CD4-positive, alpha-beta T cell (primary cell): ENCODE measurements at regions of chr15 and their contacts with region 1.

Region 1: DNA sequence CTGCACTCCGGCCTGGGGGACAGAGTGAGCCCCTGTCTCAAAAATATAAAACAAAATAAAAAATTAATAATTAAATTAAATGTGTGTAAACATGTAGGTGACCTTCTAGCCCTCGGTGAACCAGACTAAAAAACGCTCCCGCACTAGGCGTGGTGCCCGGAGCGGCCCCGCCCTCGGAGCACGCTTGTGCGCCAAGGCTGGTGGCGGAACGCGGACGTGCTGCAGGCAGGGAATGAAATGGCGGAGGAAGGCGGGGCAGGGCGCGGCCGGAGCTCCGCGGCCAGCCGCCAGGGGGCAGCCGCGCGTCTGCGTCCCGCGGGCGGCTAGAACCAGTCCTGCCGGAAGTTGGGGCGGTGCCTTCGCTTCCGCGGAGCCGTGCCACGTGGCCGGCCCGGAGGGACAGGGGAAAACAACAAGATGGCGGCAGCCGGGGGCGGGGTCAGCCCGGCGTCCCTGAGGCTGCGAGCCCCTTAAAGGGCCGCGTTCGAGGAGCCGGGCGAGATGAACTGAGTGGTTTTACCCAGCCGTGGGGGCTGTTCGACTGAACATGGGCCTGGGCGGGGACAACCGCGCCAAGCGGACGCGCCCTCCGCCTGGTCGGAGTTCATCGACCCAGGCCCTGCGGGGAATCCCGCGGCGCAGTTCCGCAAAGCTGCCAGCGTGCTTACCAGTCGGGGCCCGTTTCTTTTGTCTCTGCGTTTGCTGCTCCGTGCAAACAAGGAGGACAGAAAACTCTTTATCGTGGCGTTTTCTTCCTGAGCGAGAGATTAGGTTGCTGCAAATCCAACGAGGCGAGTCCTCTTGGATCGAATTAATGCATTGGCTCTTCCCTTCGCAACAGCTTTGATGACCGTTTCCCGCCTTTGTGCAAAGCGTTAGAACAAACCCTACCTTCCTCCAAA is 90.9 kb upstream of the CHD2 start:
- DNase-seq: peak; percentile 96 to 100 (median 98)
- ATAC-seq: peak; percentile 70
- H3K4me3 ChIP-seq: peak overlapping the region; percentile 59
- H3K4me3 Mint-ChIP-seq: peak overlapping the region; percentile 82
- H3K27ac ChIP-seq: peak overlapping the region; percentile 95 to 98
- H3K27ac Mint-ChIP-seq: peak overlapping the region; percentile 100
- H3K4me1 ChIP-seq: peaks cover 52% of the 10 kb centered on the region
- H3K4me1 Mint-ChIP-seq: peaks cover 63% of the 10 kb centered on the region
- H3K27me3 ChIP-seq: no peaks in the 10 kb centered on the region
- H3K27me3 Mint-ChIP-seq: no peaks in the 10 kb centered on the region
- CTCF ChIP-seq: peak; percentile 75

Region 2: GRCh38 chr15:92751524-92751923 is 57.7 kb before region 1 on chr15:
- CTCF ChIA-PET with region 1: no interaction called
- POLR2A ChIA-PET with region 1: no interaction called
- intact Hi-C with region 1: no loop called
- DNase-seq: no peak
- ATAC-seq: no peak
- H3K4me3 ChIP-seq: no peak overlapping the region
- H3K4me3 Mint-ChIP-seq: no peak overlapping the region
- H3K27ac ChIP-seq: no peak overlapping the region
- H3K27ac Mint-ChIP-seq: no peak overlapping the region
- H3K4me1 ChIP-seq: no peaks in the 10 kb centered on the region
- H3K4me1 Mint-ChIP-seq: no peaks in the 10 kb centered on the region
- H3K27me3 ChIP-seq: no peaks in the 10 kb centered on the region
- H3K27me3 Mint-ChIP-seq: no peaks in the 10 kb centered on the region
- CTCF ChIP-seq: no peak

Region 3: DNA sequence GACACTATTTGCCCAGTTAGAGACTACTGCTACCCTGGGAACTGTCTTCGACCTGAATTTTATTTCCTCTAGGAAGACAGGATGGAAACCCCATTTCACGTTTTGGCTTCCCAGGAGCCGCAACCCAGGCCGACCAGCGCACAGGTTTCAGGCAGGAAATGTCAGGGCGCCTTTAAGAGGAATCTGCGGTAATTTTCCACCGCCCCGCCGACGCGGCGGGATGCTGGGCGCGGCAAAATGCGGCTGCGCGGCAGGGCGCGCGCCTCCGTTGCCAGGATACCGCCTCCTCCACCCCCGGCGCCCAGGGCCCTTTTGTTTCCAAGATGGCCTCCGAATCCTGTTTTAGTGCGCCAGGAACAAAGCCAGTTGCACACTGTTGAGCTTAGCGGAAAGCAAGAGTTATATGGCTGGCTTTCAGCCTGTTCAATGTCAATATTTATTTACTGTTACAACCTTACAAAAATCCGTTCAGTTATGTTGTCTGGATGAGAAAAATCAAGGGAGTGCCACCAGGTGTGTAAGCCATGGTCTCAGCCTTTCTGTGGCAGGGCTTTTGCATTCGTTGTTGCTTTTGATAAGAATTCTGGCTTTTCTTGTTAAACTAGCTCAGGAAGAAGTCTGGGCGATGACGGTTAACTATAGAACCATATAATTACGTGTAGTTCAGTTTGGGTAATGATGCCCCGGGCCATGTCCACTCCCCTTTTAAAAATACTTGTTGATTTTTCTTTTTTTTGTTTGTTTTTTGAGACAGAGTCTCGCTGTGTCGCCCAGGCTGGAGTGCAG is 11.2 kb after region 1 on chr15:
- CTCF ChIA-PET with region 1: interaction called, 37 read pairs
- POLR2A ChIA-PET with region 1: interaction called, 155 read pairs
- intact Hi-C with region 1: loop called in 1 of 2 experiments (anchors 1 kb)
- DNase-seq: peak; percentile 69 to 94 (median 82)
- ATAC-seq: peak; percentile 81
- H3K4me3 ChIP-seq: peak overlapping the region; percentile 63
- H3K4me3 Mint-ChIP-seq: peak overlapping the region; percentile 88
- H3K27ac ChIP-seq: peak overlapping the region; percentile 82 to 91
- H3K27ac Mint-ChIP-seq: peak overlapping the region; percentile 79
- H3K4me1 ChIP-seq: peaks cover 52% of the 10 kb centered on the region
- H3K4me1 Mint-ChIP-seq: peaks cover 55% of the 10 kb centered on the region
- H3K27me3 ChIP-seq: no peaks in the 10 kb centered on the region
- H3K27me3 Mint-ChIP-seq: no peaks in the 10 kb centered on the region
- CTCF ChIP-seq: no peak

Region 4: GRCh38 chr15:92839696-92840095 is 30.5 kb after region 1 on chr15:
- CTCF ChIA-PET with region 1: interaction called, 9 read pairs
- POLR2A ChIA-PET with region 1: interaction called, 160 read pairs
- intact Hi-C with region 1: no loop called
- DNase-seq: peak in 3 of 14 experiments; percentile 11 to 52 (median 32)
- ATAC-seq: peak; percentile 31
- H3K4me3 ChIP-seq: no peak overlapping the region
- H3K4me3 Mint-ChIP-seq: peak overlapping the region; percentile 76
- H3K27ac ChIP-seq: peak overlapping the region; percentile 32 to 65
- H3K27ac Mint-ChIP-seq: peak overlapping the region; percentile 86
- H3K4me1 ChIP-seq: peaks cover 55% of the 10 kb centered on the region
- H3K4me1 Mint-ChIP-seq: peaks cover 44% of the 10 kb centered on the region
- H3K27me3 ChIP-seq: no peaks in the 10 kb centered on the region
- H3K27me3 Mint-ChIP-seq: no peaks in the 10 kb centered on the region
- CTCF ChIP-seq: no peak

Region 5: DNA sequence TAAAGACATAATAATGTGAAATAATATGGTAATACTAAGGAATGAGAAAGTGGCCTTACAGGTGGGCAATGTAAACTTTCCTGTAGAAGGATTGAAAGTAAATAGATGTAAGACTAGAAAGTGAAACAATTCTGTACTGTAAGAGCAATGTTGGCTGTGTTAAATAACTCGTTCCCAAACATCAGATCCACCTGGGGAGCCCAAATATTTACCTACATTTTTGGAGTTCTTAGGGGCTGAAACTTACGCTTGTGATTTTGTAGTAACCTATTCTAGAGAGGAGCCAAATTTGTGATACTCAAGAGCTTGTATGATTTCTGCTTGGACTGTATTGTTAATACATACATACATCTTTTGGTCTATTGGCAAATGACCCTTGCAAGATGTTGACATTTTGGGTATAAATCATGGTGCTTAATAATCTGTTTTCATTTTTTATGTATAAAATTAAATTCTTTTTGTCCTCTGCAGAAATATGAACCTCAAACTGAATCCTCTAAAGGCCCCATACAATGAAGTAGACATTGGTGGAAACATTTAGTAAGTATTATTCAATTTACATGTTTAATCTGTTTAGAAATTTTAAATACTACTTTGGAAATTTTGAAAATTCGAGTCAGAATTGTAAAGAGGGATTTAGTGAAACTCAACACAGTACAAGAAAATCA is 82.4 kb after region 1 on chr15:
- CTCF ChIA-PET with region 1: interaction called, 52 read pairs
- POLR2A ChIA-PET with region 1: interaction called, 913 read pairs
- intact Hi-C with region 1: no loop called
- DNase-seq: peak in 1 of 14 experiments; percentile 4
- ATAC-seq: no peak
- H3K4me3 ChIP-seq: no peak overlapping the region
- H3K4me3 Mint-ChIP-seq: peak overlapping the region; percentile 70
- H3K27ac ChIP-seq: peak overlapping the region in 1 of 2 donors; percentile 20
- H3K27ac Mint-ChIP-seq: peak overlapping the region; percentile 99
- H3K4me1 ChIP-seq: peaks cover 35% of the 10 kb centered on the region
- H3K4me1 Mint-ChIP-seq: peaks cover 93% of the 10 kb centered on the region
- H3K27me3 ChIP-seq: no peaks in the 10 kb centered on the region
- H3K27me3 Mint-ChIP-seq: no peaks in the 10 kb centered on the region
- CTCF ChIP-seq: no peak

Region 6: GRCh38 chr15:92917606-92918407 is 108.6 kb after region 1 on chr15:
- CTCF ChIA-PET with region 1: interaction called, 50 read pairs
- POLR2A ChIA-PET with region 1: interaction called, 234 read pairs
- intact Hi-C with region 1: loop called (anchors 1 kb)
- DNase-seq: peak; percentile 82 to 95 (median 90)
- ATAC-seq: peak; percentile 26
- H3K4me3 ChIP-seq: no peak overlapping the region
- H3K4me3 Mint-ChIP-seq: peak overlapping the region; percentile 67
- H3K27ac ChIP-seq: peak overlapping the region; percentile 63 to 75
- H3K27ac Mint-ChIP-seq: peak overlapping the region; percentile 99
- H3K4me1 ChIP-seq: peaks cover 77% of the 10 kb centered on the region
- H3K4me1 Mint-ChIP-seq: peaks cover 84% of the 10 kb centered on the region
- H3K27me3 ChIP-seq: no peaks in the 10 kb centered on the region
- H3K27me3 Mint-ChIP-seq: no peaks in the 10 kb centered on the region
- CTCF ChIP-seq: peak; percentile 94